ENCODE measurements at regions of chr10 and their contacts with region 1.

Region 1: DNA sequence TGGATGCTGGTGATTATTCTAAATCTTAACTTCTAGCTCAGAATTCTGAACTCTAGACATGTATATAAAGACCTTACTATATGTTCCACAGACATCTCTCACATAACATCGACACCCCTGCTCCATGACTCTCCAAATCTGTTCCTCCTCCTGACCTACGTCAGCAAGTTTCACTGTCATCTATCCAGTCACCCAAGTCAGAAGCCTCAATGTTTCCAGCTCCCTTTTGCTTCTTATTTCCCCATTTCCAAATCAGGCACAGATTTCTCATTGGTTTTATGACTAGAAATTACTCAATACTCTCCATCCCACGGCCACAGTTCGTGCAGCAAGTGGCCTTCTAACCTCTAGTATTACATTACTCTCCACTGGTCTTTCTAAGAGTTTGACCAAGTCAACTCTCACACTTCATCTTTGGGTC is 28.5 kb downstream of the EPC1 start:
- DNase-seq: peak; percentile 55
- H3K4me3 Mint-ChIP-seq: peak overlapping the region; percentile 48
- H3K27ac Mint-ChIP-seq: peak overlapping the region; percentile 88
- H3K4me1 Mint-ChIP-seq: peaks cover 77% of the 10 kb centered on the region
- H3K27me3 Mint-ChIP-seq: no peaks in the 10 kb centered on the region

Region 2: DNA sequence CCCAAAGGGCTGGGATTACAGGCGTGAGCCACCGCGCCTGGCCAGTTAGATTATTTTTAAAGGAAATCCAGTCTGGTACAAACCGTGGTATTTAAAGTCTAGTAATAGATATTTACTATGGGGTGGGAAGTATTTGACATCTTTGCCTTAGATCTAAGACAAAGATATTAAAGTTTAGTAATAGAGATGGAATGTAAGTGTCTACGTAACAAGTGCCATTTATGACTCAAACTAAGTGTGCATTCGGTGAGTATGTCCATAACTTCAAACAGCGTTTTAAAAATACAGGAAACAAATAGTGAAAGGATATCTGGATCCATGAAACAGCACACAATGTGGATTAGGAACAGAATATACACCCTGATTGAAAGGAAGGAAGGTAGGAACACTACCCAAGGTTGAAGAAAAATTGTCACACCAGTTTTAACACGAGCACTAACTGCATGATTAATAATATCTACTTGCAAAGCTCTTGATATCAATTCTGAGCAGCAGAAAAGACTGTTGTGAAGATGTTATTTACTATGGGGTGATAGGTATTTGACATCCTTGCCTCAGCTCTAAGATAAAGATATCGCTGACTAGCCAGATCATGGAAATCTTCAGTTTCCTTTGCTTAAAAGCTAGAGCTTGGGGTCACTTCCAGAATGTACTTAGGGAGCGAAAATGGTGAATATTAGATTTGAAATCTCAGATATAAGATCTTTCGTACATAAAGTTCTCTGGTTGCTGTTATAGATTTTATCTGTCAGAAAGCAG is 20.3 kb before region 1 on chr10:
- CTCF ChIA-PET with region 1: interaction called, 3 read pairs
- POLR2A ChIA-PET with region 1: interaction called, 3 read pairs
- intact Hi-C with region 1: loop called (anchors 2 kb)
- DNase-seq: no peak
- H3K4me3 Mint-ChIP-seq: peak overlapping the region; percentile 69
- H3K27ac Mint-ChIP-seq: peak overlapping the region; percentile 90
- H3K4me1 Mint-ChIP-seq: peaks cover 62% of the 10 kb centered on the region
- H3K27me3 Mint-ChIP-seq: no peaks in the 10 kb centered on the region

Region 3: DNA sequence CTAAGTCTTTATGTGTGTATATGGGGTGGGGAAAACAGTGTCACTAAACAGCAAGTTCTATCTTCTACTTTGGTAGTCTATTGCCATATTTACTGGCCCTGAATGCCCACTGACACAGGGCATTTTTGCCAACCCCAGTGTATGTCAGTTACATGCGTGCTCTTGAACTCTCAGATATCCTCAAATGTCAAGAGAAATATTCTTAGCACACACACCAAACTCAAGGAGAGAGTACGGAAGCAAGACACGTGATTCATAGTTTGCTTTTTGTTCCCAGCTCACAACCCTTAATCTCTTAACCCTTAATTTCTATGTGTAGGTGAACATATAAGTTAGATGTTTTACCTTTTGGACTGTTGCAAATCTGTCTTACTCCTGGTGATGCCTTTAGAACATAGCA is 10.9 kb before region 1 on chr10:
- CTCF ChIA-PET with region 1: interaction called, 4 read pairs
- POLR2A ChIA-PET with region 1: no interaction called
- intact Hi-C with region 1: loop called (anchors 1 kb)
- DNase-seq: no peak
- H3K4me3 Mint-ChIP-seq: peak overlapping the region; percentile 32
- H3K27ac Mint-ChIP-seq: peak overlapping the region; percentile 76
- H3K4me1 Mint-ChIP-seq: peaks cover 66% of the 10 kb centered on the region
- H3K27me3 Mint-ChIP-seq: no peaks in the 10 kb centered on the region

Region 4: GRCh38 chr10:32332299-32332750 is 13.8 kb after region 1 on chr10:
- CTCF ChIA-PET with region 1: interaction called, 5 read pairs
- POLR2A ChIA-PET with region 1: interaction called, 15 read pairs
- intact Hi-C with region 1: loop called (anchors 1 kb)
- DNase-seq: peak; percentile 90
- H3K4me3 Mint-ChIP-seq: peak overlapping the region; percentile 75
- H3K27ac Mint-ChIP-seq: peak overlapping the region; percentile 91
- H3K4me1 Mint-ChIP-seq: peaks cover 93% of the 10 kb centered on the region
- H3K27me3 Mint-ChIP-seq: no peaks in the 10 kb centered on the region

Region 5: DNA sequence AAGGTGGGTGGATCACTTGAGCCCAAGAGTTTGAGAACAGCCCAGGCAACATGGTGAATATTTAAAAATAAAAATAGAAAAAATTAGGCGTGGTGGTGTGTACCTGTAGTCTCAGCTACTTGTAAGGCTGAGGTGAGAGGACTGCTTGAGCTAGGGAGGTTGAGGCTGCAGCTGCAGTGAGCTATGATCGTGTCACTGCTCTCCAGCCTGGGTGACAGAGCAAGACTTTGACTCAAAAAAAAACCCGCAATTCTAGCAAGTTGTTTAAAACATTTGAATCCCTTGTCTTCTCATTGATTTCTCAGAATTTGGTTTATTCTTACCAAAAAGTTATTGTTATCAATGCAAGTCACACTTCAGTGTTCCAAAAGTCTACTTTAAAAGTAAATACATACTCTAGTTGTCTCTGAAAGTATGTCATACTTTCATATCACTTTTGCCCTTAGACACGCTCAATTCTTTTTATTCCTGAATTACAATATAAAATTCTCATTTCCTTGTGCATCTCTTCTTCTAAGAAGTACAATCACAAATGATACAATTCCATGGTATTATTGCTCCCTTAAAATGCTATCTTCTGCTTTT is 22.2 kb after region 1 on chr10:
- CTCF ChIA-PET with region 1: interaction called, 8 read pairs
- POLR2A ChIA-PET with region 1: interaction called, 6 read pairs
- intact Hi-C with region 1: loop called (anchors 2 kb)
- DNase-seq: peak; percentile 67
- H3K4me3 Mint-ChIP-seq: peak overlapping the region; percentile 17
- H3K27ac Mint-ChIP-seq: peak overlapping the region; percentile 73
- H3K4me1 Mint-ChIP-seq: peaks cover 87% of the 10 kb centered on the region
- H3K27me3 Mint-ChIP-seq: no peaks in the 10 kb centered on the region

Region 6: DNA sequence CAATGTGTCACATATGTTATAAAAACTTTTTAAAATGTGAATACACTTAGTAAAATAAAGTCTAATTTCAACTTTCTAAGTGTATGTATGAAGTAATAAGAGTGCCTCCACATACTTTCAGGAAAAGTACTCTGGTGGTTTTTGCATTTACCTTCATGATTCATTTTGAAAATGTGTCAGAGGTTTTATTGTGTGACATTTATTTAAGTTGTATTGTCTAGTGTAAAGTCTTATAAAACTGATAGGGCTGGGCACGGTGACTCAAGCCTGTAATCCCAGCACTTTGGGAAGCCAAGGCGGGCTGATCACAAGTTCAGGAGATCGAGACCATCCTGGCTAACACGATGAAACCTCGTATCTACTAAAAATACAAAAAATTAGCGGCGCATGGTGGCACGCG is 413.0 kb after region 1 on chr10:
- CTCF ChIA-PET with region 1: no interaction called
- POLR2A ChIA-PET with region 1: no interaction called
- intact Hi-C with region 1: no loop called
- DNase-seq: no peak
- H3K4me3 Mint-ChIP-seq: no peak overlapping the region
- H3K27ac Mint-ChIP-seq: no peak overlapping the region
- H3K4me1 Mint-ChIP-seq: no peaks in the 10 kb centered on the region
- H3K27me3 Mint-ChIP-seq: no peaks in the 10 kb centered on the region

Region 7: GRCh38 chr10:32856387-32856786 is 537.9 kb after region 1 on chr10:
- CTCF ChIA-PET with region 1: no interaction called
- POLR2A ChIA-PET with region 1: no interaction called
- intact Hi-C with region 1: no loop called
- DNase-seq: no peak
- H3K4me3 Mint-ChIP-seq: no peak overlapping the region
- H3K27ac Mint-ChIP-seq: no peak overlapping the region
- H3K4me1 Mint-ChIP-seq: peaks cover 5% of the 10 kb centered on the region
- H3K27me3 Mint-ChIP-seq: no peaks in the 10 kb centered on the region